Activated CD4-positive, alpha-beta T cell treated with anti-CD3 and anti-CD28 coated beads for 36 hours (primary cell): ENCODE measurements at regions of chrX and their contacts with region 1.

Region 1: GRCh38 chrX:51496501-51497291 is at the start of gene NUDT11:
- DNase-seq: peak; percentile 72
- ATAC-seq: peak; percentile 76
- H3K4me3 Mint-ChIP-seq: peak within 1 kb of the TSS; percentile 73
- H3K27ac Mint-ChIP-seq: peak within 1 kb of the TSS; percentile 70
- H3K4me1 Mint-ChIP-seq: peaks cover 9% of the 10 kb centered on the region
- H3K27me3 Mint-ChIP-seq: peaks cover 26% of the 10 kb centered on the region
- total RNA-seq, gene NUDT11: 1.9 to 2.4 TPM

Region 2: GRCh38 chrX:51395810-51396728 is 100.6 kb before region 1 on chrX:
- CTCF ChIA-PET with region 1: no interaction called
- POLR2A ChIA-PET with region 1: no interaction called
- intact Hi-C with region 1: loop called in 1 of 2 experiments (anchors 1 kb)
- DNase-seq: peak; percentile 77
- ATAC-seq: peak; percentile 77
- H3K4me3 Mint-ChIP-seq: peak overlapping the region; percentile 81
- H3K27ac Mint-ChIP-seq: peak overlapping the region; percentile 84
- H3K4me1 Mint-ChIP-seq: peaks cover 44% of the 10 kb centered on the region
- H3K27me3 Mint-ChIP-seq: no peaks in the 10 kb centered on the region

Region 3: GRCh38 chrX:51614353-51615012 is 117.8 kb after region 1 on chrX:
- CTCF ChIA-PET with region 1: no interaction called
- POLR2A ChIA-PET with region 1: no interaction called
- intact Hi-C with region 1: loop called in 1 of 2 experiments (anchors 10 kb)
- DNase-seq: no peak
- ATAC-seq: no peak
- H3K4me3 Mint-ChIP-seq: no peak overlapping the region
- H3K27ac Mint-ChIP-seq: no peak overlapping the region
- H3K4me1 Mint-ChIP-seq: peaks cover 3% of the 10 kb centered on the region
- H3K27me3 Mint-ChIP-seq: peaks cover 32% of the 10 kb centered on the region

Region 4: GRCh38 chrX:51802917-51803688 is 306.4 kb after region 1 on chrX:
- CTCF ChIA-PET with region 1: no interaction called
- POLR2A ChIA-PET with region 1: no interaction called
- intact Hi-C with region 1: loop called in 1 of 2 experiments (anchors 10 kb)
- DNase-seq: peak; percentile 72
- ATAC-seq: peak; percentile 93
- H3K4me3 Mint-ChIP-seq: peak overlapping the region; percentile 100
- H3K27ac Mint-ChIP-seq: peak overlapping the region; percentile 98
- H3K4me1 Mint-ChIP-seq: peaks cover 21% of the 10 kb centered on the region
- H3K27me3 Mint-ChIP-seq: no peaks in the 10 kb centered on the region

Region 5: GRCh38 chrX:51892921-51893745 is 396.4 kb after region 1 on chrX and contains the start of gene MAGED1:
- CTCF ChIA-PET with region 1: no interaction called
- POLR2A ChIA-PET with region 1: no interaction called
- intact Hi-C with region 1: loop called in 1 of 2 experiments (anchors 10 kb)
- DNase-seq: peak; percentile 90
- ATAC-seq: peak; percentile 97
- H3K4me3 Mint-ChIP-seq: peak within 1 kb of the TSS; percentile 92
- H3K27ac Mint-ChIP-seq: peak within 1 kb of the TSS; percentile 83
- H3K4me1 Mint-ChIP-seq: peaks cover 19% of the 10 kb centered on the region
- H3K27me3 Mint-ChIP-seq: no peaks in the 10 kb centered on the region
- total RNA-seq, gene MAGED1: 46.8 to 55.4 TPM